ENCODE measurements at regions of chr18 and their contacts with region 1.

Region 1: GRCh38 chr18:6920099-6920899 is 190.8 kb downstream of the ARHGAP28 start:
- DNase-seq: peak; percentile 38
- ATAC-seq: no peak
- H3K4me3 ChIP-seq: no peak overlapping the region
- H3K27ac ChIP-seq: no peak overlapping the region
- H3K4me1 ChIP-seq: no peaks in the 10 kb centered on the region
- H3K27me3 ChIP-seq: no peaks in the 10 kb centered on the region
- CTCF ChIP-seq: peak; percentile 90

Region 2: DNA sequence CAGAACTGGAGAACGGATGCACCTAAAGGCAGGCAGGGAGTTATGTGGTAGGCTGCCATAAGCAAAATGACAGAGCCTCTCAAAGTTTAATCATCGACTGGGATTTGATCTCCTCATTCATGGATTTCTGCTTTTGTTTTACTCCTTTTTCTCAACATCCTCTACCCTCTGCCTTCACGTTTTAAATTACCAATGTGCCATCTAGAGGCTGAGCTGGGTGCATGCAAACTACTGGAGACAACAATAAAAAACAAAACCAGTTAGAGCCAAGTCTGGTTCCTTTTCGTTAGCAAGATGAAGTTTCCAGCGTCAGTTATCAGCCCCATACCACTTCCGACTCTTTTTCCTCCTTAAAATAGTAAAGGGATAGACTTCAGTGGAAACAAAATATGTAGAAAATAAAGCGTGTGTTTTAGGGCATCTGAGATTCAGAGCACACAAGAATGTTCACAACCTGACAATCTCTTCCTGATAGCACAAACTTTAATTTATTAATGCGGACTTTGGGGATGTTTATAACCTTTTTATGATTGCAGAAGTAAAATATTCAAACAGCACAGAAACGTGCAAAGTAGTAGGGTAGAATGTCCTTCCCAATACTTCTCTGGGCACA is 80.3 kb after region 1 on chr18:
- CTCF ChIA-PET with region 1: interaction called, 3 read pairs
- POLR2A ChIA-PET with region 1: no interaction called
- in situ Hi-C with region 1: no loop called
- intact Hi-C with region 1: loop called (anchors 5 kb)
- DNase-seq: peak; percentile 4
- ATAC-seq: no peak
- H3K4me3 ChIP-seq: no peak overlapping the region
- H3K27ac ChIP-seq: no peak overlapping the region
- H3K4me1 ChIP-seq: no peaks in the 10 kb centered on the region
- H3K27me3 ChIP-seq: no peaks in the 10 kb centered on the region
- CTCF ChIP-seq: peak; percentile 64

Region 3: GRCh38 chr18:7021994-7022840 is 101.9 kb after region 1 on chr18:
- CTCF ChIA-PET with region 1: interaction called, 6 read pairs
- POLR2A ChIA-PET with region 1: no interaction called
- in situ Hi-C with region 1: no loop called
- intact Hi-C with region 1: loop called (anchors 2 kb)
- DNase-seq: peak; percentile 15
- ATAC-seq: peak; percentile 93
- H3K4me3 ChIP-seq: no peak overlapping the region
- H3K27ac ChIP-seq: no peak overlapping the region
- H3K4me1 ChIP-seq: no peaks in the 10 kb centered on the region
- H3K27me3 ChIP-seq: no peaks in the 10 kb centered on the region
- CTCF ChIP-seq: peak; percentile 81

Region 4: GRCh38 chr18:7177116-7177744 is 256.9 kb after region 1 on chr18:
- CTCF ChIA-PET with region 1: interaction called, 17 read pairs
- POLR2A ChIA-PET with region 1: no interaction called
- in situ Hi-C with region 1: no loop called
- intact Hi-C with region 1: loop called (anchors 5 kb)
- DNase-seq: peak; percentile 15
- ATAC-seq: peak; percentile 81; the same call in 1 of the 2 replicates
- H3K4me3 ChIP-seq: no peak overlapping the region
- H3K27ac ChIP-seq: no peak overlapping the region
- H3K4me1 ChIP-seq: no peaks in the 10 kb centered on the region
- H3K27me3 ChIP-seq: no peaks in the 10 kb centered on the region; the same call in 1 of the 2 replicates
- CTCF ChIP-seq: peak; percentile 78

Measured in Panc1 (cell line).